ENCODE measurements at regions of chr1 and their contacts with region 1.

Region 1: GRCh38 chr1:23539698-23540266 is 8.7 kb upstream of the E2F2 start:
- H3K4me3 Mint-ChIP-seq: no peak overlapping the region
- H3K27ac Mint-ChIP-seq: no peak overlapping the region
- H3K4me1 Mint-ChIP-seq: peaks cover 31% of the 10 kb centered on the region
- H3K27me3 Mint-ChIP-seq: peaks cover 11% of the 10 kb centered on the region

Region 2: GRCh38 chr1:23554481-23555269 is 14.9 kb after region 1 on chr1:
- intact Hi-C with region 1: no loop called
- H3K4me3 Mint-ChIP-seq: peak overlapping the region; percentile 96
- H3K27ac Mint-ChIP-seq: peak overlapping the region; percentile 93
- H3K4me1 Mint-ChIP-seq: peaks cover 48% of the 10 kb centered on the region
- H3K27me3 Mint-ChIP-seq: peaks cover 72% of the 10 kb centered on the region

Region 3: DNA sequence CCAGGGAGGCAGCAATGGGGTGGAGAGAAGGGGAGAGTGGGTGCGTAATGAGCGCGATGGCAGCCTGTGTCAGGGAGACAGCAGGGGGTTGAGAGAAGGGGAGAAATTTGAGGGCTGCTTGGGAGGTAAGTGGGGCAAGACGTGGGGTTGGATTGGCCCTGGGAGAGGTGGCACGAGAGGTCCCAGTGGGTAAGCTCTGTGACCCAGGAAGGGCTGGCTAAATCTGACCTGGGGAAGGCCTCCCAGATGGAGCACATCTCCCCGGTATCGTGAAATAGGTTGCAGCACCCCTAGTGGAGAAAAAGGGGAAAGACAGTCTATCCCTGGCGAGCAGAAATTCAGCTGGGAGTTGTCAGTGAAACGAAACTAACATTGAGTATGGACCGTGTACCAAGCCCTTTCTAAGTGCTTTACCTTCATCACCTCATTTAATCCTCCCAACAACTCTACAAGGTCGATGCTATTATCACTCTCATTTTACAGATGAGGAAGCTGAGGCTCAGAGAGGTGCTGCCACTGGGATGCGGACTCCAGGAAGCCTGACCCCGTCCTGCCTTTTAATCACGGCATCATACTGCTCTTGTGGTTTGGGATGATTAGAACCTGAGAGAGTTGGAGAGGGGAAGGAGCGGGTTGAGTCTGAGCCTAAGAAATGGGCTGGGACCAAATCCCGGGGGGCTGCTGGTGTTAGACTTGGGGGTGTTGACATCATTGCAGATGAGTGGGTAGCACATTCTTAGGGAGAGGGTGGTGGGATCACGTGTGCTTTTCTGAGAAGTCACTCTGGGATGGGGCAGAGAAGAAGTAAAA is 95.3 kb after region 1 on chr1:
- intact Hi-C with region 1: loop called (anchors 1 kb)
- H3K4me3 Mint-ChIP-seq: peak overlapping the region; percentile 61
- H3K27ac Mint-ChIP-seq: peak overlapping the region; percentile 36
- H3K4me1 Mint-ChIP-seq: peaks cover 24% of the 10 kb centered on the region
- H3K27me3 Mint-ChIP-seq: peaks cover 48% of the 10 kb centered on the region

Region 4: GRCh38 chr1:23732363-23733224 is 192.8 kb after region 1 on chr1:
- intact Hi-C with region 1: no loop called
- H3K4me3 Mint-ChIP-seq: no peak overlapping the region
- H3K27ac Mint-ChIP-seq: no peak overlapping the region
- H3K4me1 Mint-ChIP-seq: peaks cover 39% of the 10 kb centered on the region
- H3K27me3 Mint-ChIP-seq: no peaks in the 10 kb centered on the region

Region 5: DNA sequence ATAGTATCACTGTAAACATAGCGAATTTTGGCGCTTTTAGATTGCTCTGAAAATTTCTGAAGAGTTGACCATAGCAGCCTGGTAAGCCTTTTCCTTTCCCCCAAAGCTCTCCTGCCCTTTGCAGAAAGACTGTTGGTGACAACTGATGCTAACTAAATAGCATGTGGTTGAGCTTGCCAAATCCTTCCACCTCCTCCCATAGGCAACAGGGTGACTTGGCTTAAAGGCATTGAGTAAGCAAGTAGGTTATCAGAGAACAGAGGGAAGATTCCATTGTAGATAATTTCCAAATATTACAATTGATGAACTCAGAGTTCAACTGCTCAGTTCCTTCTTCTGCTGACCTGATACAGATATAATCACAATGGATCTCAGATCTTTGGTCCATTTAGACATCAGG is 305.4 kb after region 1 on chr1:
- intact Hi-C with region 1: no loop called
- H3K4me3 Mint-ChIP-seq: no peak overlapping the region
- H3K27ac Mint-ChIP-seq: no peak overlapping the region
- H3K4me1 Mint-ChIP-seq: no peaks in the 10 kb centered on the region
- H3K27me3 Mint-ChIP-seq: no peaks in the 10 kb centered on the region

Measured in dendritic cell treated with granulocyte-macrophage colony-stimulating factor and Interleukin-4, amounts not matched to agents 40 ng/mL and 50 ng/mL, for 4 days (primary cell).